WTC11 (cell line): ENCODE measurements at regions of chr7 and their contacts with region 1.

Region 1: GRCh38 chr7:101542527-101543241 is 86.4 kb downstream of the MYL10 start:
- DNase-seq: peak; percentile 95
- ATAC-seq: peak; percentile 69
- H3K4me3 Mint-ChIP-seq: no peak overlapping the region
- H3K27ac Mint-ChIP-seq: no peak overlapping the region; the same call in 1 of the 2 replicates
- H3K4me1 Mint-ChIP-seq: peaks cover 4% of the 10 kb centered on the region; the same call in 1 of the 2 replicates
- H3K27me3 Mint-ChIP-seq: no peaks in the 10 kb centered on the region
- CTCF ChIP-seq: peak; percentile 96

Region 2: GRCh38 chr7:100745184-100745583 is 797.5 kb before region 1 on chr7:
- CTCF ChIA-PET with region 1: no interaction called
- POLR2A ChIA-PET with region 1: no interaction called
- DNase-seq: peak; percentile 31
- ATAC-seq: peak; percentile 47
- H3K4me3 Mint-ChIP-seq: peak overlapping the region; percentile 62
- H3K27ac Mint-ChIP-seq: peak overlapping the region; percentile 28
- H3K4me1 Mint-ChIP-seq: no peaks in the 10 kb centered on the region
- H3K27me3 Mint-ChIP-seq: peaks cover 17% of the 10 kb centered on the region
- CTCF ChIP-seq: no peak

Region 3: DNA sequence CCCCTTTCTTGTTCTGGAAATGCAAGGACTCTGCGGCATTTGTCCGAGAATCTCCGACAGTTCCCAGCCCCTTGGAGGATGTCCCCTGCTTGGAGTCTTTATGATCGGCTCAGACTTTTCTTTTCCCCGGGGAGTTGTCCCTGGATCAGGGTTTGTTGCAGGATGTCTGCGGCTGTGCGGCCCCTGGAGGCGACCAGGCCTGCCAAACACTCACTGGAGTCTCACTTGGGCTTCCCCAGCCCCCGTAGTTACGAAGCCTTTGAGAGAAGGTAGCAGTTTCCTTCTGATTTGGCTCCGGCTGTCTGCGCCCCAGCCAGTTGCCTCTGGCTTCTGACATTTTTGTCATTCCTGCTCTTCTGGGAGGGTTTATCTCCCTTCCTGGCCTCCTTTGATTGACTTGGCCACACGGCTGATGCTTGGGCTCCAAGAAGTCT is 163.9 kb before region 1 on chr7:
- CTCF ChIA-PET with region 1: no interaction called
- POLR2A ChIA-PET with region 1: no interaction called
- DNase-seq: peak; percentile 67
- ATAC-seq: peak; percentile 89
- H3K4me3 Mint-ChIP-seq: no peak overlapping the region
- H3K27ac Mint-ChIP-seq: peak overlapping the region; percentile 92
- H3K4me1 Mint-ChIP-seq: peaks cover 18% of the 10 kb centered on the region
- H3K27me3 Mint-ChIP-seq: no peaks in the 10 kb centered on the region
- CTCF ChIP-seq: no peak

Region 4: GRCh38 chr7:101563899-101564777 is 21.5 kb after region 1 on chr7:
- CTCF ChIA-PET with region 1: interaction called, 19 read pairs
- POLR2A ChIA-PET with region 1: no interaction called
- DNase-seq: peak; percentile 47
- ATAC-seq: peak; percentile 29
- H3K4me3 Mint-ChIP-seq: no peak overlapping the region
- H3K27ac Mint-ChIP-seq: peak overlapping the region; percentile 86
- H3K4me1 Mint-ChIP-seq: peaks cover 38% of the 10 kb centered on the region
- H3K27me3 Mint-ChIP-seq: peaks cover 2% of the 10 kb centered on the region
- CTCF ChIP-seq: no peak

Region 5: GRCh38 chr7:101586078-101586905 is 43.6 kb after region 1 on chr7:
- CTCF ChIA-PET with region 1: interaction called, 12 read pairs
- POLR2A ChIA-PET with region 1: no interaction called
- DNase-seq: no peak
- ATAC-seq: peak; percentile 52
- H3K4me3 Mint-ChIP-seq: no peak overlapping the region
- H3K27ac Mint-ChIP-seq: no peak overlapping the region
- H3K4me1 Mint-ChIP-seq: peaks cover 5% of the 10 kb centered on the region; the same call in 1 of the 2 replicates
- H3K27me3 Mint-ChIP-seq: peaks cover 21% of the 10 kb centered on the region
- CTCF ChIP-seq: no peak

Region 6: DNA sequence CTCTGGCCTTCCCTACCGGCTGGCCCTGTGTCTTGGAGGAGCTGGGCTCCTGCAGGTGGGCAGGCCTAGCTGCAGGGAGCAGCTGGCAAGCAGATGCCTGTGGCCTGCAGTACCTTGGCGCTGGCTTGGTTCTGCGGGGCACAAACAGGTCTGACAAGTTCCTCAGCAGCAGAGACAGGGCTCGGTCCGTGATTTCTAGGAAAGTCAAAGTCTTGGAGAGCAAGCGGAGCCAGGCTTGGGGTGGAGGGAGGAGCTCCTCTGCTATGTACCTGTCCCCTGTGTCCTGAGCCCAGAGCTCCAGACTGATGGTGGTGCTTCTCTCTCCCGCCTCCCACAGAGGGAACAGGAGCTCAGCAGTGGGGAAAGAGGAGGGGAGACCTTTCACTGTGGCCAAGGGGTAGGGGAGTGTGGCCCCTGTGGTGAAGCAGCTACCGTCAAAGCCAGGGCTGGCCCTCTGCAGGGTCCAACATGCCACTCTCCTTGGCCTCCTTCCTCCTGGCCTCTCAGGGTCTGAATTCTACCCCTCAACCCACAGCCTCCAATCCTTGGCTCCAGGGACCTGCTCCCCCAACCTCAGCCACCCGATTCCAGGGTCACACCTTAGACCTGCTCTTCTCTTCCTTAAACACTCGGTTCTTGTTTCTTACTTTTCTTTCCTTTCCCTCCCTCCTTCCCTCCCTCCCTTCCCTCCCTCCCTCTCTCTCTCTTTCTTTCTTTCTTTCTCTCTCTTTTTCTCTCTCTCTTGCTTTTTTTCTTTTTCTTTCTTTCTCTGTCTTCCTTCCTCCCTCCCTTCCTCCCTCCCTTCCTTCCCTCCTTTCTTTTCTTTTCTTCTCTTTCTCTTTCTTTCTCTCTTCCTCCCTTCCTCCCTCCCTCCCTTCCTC is 66.4 kb after region 1 on chr7:
- CTCF ChIA-PET with region 1: interaction called, 10 read pairs
- POLR2A ChIA-PET with region 1: no interaction called
- DNase-seq: peak; percentile 48
- ATAC-seq: peak; percentile 70
- H3K4me3 Mint-ChIP-seq: no peak overlapping the region
- H3K27ac Mint-ChIP-seq: no peak overlapping the region
- H3K4me1 Mint-ChIP-seq: peaks cover 29% of the 10 kb centered on the region
- H3K27me3 Mint-ChIP-seq: no peaks in the 10 kb centered on the region
- CTCF ChIP-seq: no peak

Region 7: DNA sequence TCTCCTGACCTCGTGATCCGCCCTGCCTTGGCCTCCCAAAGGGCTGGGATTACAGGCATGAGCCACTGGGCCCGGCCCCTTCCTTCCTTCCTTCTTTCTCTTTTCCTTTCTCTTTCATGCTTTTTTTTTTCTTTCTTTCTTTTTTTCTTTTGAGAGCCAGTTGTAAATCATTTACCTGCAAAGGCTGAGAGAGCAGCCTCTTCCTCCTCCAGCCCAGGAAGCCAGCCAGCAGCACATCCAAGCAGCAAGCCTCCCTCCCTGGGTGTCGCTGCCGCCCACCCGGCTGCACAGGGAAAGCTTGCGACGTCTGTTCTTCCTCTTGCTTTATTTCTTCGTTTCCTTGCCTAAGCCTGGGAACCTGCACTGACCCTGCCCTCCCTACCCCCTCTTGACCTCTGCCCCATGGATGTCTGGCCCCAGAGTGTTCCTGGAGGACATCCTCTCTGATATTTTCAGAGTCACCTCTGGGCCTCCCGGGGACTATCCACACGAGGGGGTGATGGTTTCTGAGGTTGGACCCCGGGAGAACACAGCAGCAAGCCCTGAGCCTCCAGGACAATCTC is 149.2 kb after region 1 on chr7:
- CTCF ChIA-PET with region 1: no interaction called
- POLR2A ChIA-PET with region 1: no interaction called
- DNase-seq: no peak
- ATAC-seq: no peak
- H3K4me3 Mint-ChIP-seq: no peak overlapping the region
- H3K27ac Mint-ChIP-seq: no peak overlapping the region
- H3K4me1 Mint-ChIP-seq: peaks cover 5% of the 10 kb centered on the region
- H3K27me3 Mint-ChIP-seq: peaks cover 7% of the 10 kb centered on the region
- CTCF ChIP-seq: no peak

Region 8: GRCh38 chr7:102272075-102272917 is 729.6 kb after region 1 on chr7:
- CTCF ChIA-PET with region 1: interaction called, 10 read pairs
- POLR2A ChIA-PET with region 1: no interaction called
- DNase-seq: peak; percentile 89
- ATAC-seq: peak; percentile 90
- H3K4me3 Mint-ChIP-seq: no peak overlapping the region
- H3K27ac Mint-ChIP-seq: no peak overlapping the region
- H3K4me1 Mint-ChIP-seq: peaks cover 5% of the 10 kb centered on the region; the same call in 1 of the 2 replicates
- H3K27me3 Mint-ChIP-seq: no peaks in the 10 kb centered on the region
- CTCF ChIP-seq: peak; percentile 92